GM12878 (cell line): ENCODE measurements at regions of chr12 and their contacts with region 1.

Region 1: GRCh38 chr12:54032627-54033100 is at the start of gene HOXC5:
- DNase-seq: no peak
- ATAC-seq: peak; percentile 43
- H3K4me3 ChIP-seq: peak within 1 kb of the TSS; percentile 61
- H3K27ac ChIP-seq: no peak within 1 kb of the TSS
- H3K4me1 ChIP-seq: peaks cover 9% of the 10 kb centered on the region; the same call in 1 of the 2 replicates
- H3K27me3 ChIP-seq: peaks cover 3 to 30% of the 10 kb centered on the region in 2 experiments
- CTCF ChIP-seq: peak; percentile 93 to 96 (median 95)
- EP300 ChIP-seq: 0 out of 4 replicates have a peak, but pooled peaks of 1 of the 2 experiments have one; percentile 37
- POLR2A ChIP-seq: no peak
- RAD21 ChIP-seq: peak; percentile 94
- polyA plus RNA-seq, gene HOXC5: not detected

Region 2: GRCh38 chr12:53159195-53159839 is 873.3 kb before region 1 on chr12:
- CTCF ChIA-PET with region 1: no interaction called
- POLR2A ChIA-PET with region 1: no interaction called
- RAD21 ChIA-PET with region 1: no interaction called
- SMC1A ChIA-PET with region 1: no interaction called
- in situ Hi-C with region 1: no loop called
- intact Hi-C with region 1: no loop called
- DNase-seq: peak; percentile 72
- ATAC-seq: peak; percentile 99
- H3K4me3 ChIP-seq: no peak overlapping the region
- H3K27ac ChIP-seq: no peak overlapping the region
- H3K4me1 ChIP-seq: no peaks in the 10 kb centered on the region; the same call in 1 of the 2 replicates
- H3K27me3 ChIP-seq: no peaks in the 10 kb centered on the region
- CTCF ChIP-seq: peak; percentile 97 to 100 (median 99)
- EP300 ChIP-seq: no peak
- POLR2A ChIP-seq: no peak
- RAD21 ChIP-seq: peak; percentile 99

Region 3: GRCh38 chr12:54005853-54006686 is 26.6 kb before region 1 on chr12:
- CTCF ChIA-PET with region 1: interaction called, 47 read pairs
- POLR2A ChIA-PET with region 1: no interaction called
- RAD21 ChIA-PET with region 1: interaction called, 36 read pairs
- SMC1A ChIA-PET with region 1: interaction called, 23 read pairs
- in situ Hi-C with region 1: no loop called
- intact Hi-C with region 1: loop called (anchors 1 kb)
- DNase-seq: no peak
- ATAC-seq: peak; percentile 91
- H3K4me3 ChIP-seq: peak overlapping the region; percentile 54; the same call in 1 of the 2 replicates
- H3K27ac ChIP-seq: no peak overlapping the region
- H3K4me1 ChIP-seq: peaks cover 6% of the 10 kb centered on the region
- H3K27me3 ChIP-seq: peaks cover 33 to 34% of the 10 kb centered on the region in 2 experiments
- CTCF ChIP-seq: peak; percentile 74 to 93 (median 84)
- EP300 ChIP-seq: 0 out of 4 replicates have a peak, but pooled peaks of 1 of the 2 experiments have one; percentile 15
- POLR2A ChIP-seq: no peak
- RAD21 ChIP-seq: peak; percentile 91

Region 4: DNA sequence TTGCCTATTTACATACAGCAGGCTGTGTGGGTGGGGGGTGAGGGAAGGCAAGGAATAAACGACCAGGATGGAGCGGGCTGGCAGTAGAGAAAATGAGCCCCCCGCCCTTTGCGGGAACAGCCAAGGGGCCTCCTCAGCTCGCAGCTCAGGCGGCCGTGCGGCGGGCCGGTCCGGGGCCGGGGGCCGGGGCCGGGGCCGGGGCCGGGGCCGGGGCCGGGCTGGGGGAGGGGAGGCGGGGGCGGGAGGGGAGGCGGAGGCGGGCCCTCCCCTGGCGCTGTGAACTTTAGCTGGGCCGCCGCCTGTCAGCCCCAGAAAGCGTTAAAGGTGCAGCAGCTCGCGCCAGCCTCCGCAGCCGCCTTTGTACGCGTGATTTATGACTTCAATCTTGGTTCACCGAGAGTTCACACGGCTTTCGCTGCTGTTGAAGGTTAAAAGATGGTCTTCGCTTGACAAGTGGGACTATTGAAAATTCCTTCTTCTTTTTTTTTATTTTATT is 49.8 kb after region 1 on chr12:
- CTCF ChIA-PET with region 1: interaction called, 8 read pairs
- POLR2A ChIA-PET with region 1: interaction called, 7 read pairs
- RAD21 ChIA-PET with region 1: interaction called, 11 read pairs
- SMC1A ChIA-PET with region 1: interaction called, 4 read pairs
- in situ Hi-C with region 1: no loop called
- intact Hi-C with region 1: no loop called
- DNase-seq: no peak
- ATAC-seq: no peak
- H3K4me3 ChIP-seq: peak overlapping the region; percentile 70
- H3K27ac ChIP-seq: peak overlapping the region; percentile 35
- H3K4me1 ChIP-seq: no peaks in the 10 kb centered on the region
- H3K27me3 ChIP-seq: no peaks in the 10 kb centered on the region
- CTCF ChIP-seq: no peak
- EP300 ChIP-seq: no peak
- POLR2A ChIP-seq: 0 out of 2 replicates have a peak, but pooled peaks have one; percentile 26
- RAD21 ChIP-seq: no peak

Region 5: GRCh38 chr12:54147186-54147585 is 114.5 kb after region 1 on chr12:
- CTCF ChIA-PET with region 1: interaction called, 9 read pairs
- POLR2A ChIA-PET with region 1: no interaction called
- RAD21 ChIA-PET with region 1: interaction called, 14 read pairs
- SMC1A ChIA-PET with region 1: interaction called, 4 read pairs
- in situ Hi-C with region 1: no loop called
- intact Hi-C with region 1: no loop called
- DNase-seq: no peak
- ATAC-seq: peak; percentile 48
- H3K4me3 ChIP-seq: no peak overlapping the region
- H3K27ac ChIP-seq: no peak overlapping the region
- H3K4me1 ChIP-seq: no peaks in the 10 kb centered on the region
- H3K27me3 ChIP-seq: peaks cover 0 to 4% of the 10 kb centered on the region in 2 experiments; a peak in 3 of 4 replicates
- CTCF ChIP-seq: peak in 1 of 3 experiments; percentile 31; a peak in 2 of 6 replicates
- EP300 ChIP-seq: no peak
- POLR2A ChIP-seq: no peak
- RAD21 ChIP-seq: no peak

Region 6: GRCh38 chr12:54201001-54201794 is 168.5 kb after region 1 on chr12:
- CTCF ChIA-PET with region 1: interaction called, 343 read pairs
- POLR2A ChIA-PET with region 1: interaction called, 4 read pairs
- RAD21 ChIA-PET with region 1: interaction called, 55 read pairs
- SMC1A ChIA-PET with region 1: interaction called, 47 read pairs
- in situ Hi-C with region 1: loop called (anchors 10 kb)
- intact Hi-C with region 1: loop called (anchors 2 kb)
- DNase-seq: no peak
- ATAC-seq: peak; percentile 97
- H3K4me3 ChIP-seq: no peak overlapping the region
- H3K27ac ChIP-seq: no peak overlapping the region
- H3K4me1 ChIP-seq: peaks cover 15% of the 10 kb centered on the region
- H3K27me3 ChIP-seq: peaks cover 0 to 2% of the 10 kb centered on the region in 2 experiments; a peak in 3 of 4 replicates
- CTCF ChIP-seq: peak; percentile 93 to 98 (median 96)
- EP300 ChIP-seq: no peak
- POLR2A ChIP-seq: no peak
- RAD21 ChIP-seq: peak; percentile 68